CD14-positive monocyte (primary cell): ENCODE measurements at regions of chr12 and their contacts with region 1.

Region 1: DNA sequence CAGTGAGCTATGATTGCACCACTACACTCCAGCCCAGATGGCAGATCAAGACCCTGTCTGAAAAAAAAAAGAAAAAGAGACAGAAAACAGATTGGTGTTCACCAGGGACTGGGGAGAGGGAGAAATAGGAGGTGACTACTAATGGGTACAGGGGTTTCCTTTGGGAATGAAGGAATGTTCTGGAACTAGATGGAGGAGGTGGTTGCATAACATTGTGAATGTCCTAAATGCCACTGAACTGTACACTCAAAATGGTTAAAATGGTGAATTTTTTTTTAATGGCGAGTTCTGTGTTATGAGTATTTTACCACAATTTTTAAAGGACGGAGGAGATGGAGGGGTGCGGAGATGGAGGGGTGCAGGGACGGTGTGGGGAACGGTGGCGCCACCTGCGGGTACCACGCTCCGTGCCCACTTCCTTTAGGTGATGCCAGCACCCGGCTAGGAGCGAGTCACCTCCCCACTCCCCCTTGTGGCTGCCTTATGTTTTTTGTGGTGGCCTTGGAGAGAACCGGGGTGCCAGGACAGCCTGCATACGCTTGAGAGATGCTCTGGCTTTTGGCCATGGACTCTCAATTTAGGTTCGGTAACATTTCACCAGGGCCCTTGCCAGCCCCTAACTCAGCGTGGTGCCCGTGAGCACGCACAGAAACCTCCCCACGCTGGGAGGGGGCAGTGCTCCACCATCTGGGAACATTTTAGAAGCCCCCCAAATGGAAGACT is 16.1 kb downstream of the UBC start:
- DNase-seq: peak in 2 of 3 donors; percentile 68 to 81
- H3K4me3 ChIP-seq: no peak overlapping the region
- H3K4me3 Mint-ChIP-seq: peak overlapping the region; percentile 58 to 71
- H3K27ac ChIP-seq: no peak overlapping the region
- H3K27ac Mint-ChIP-seq: peak overlapping the region in 1 of 7 donors; percentile 24
- H3K4me1 ChIP-seq: peaks cover 8% of the 10 kb centered on the region in 2 donors
- H3K4me1 Mint-ChIP-seq: peaks cover 15% of the 10 kb centered on the region
- H3K27me3 ChIP-seq: no peaks in the 10 kb centered on the region
- H3K27me3 Mint-ChIP-seq: peaks cover 0 to 4% (median 3%) of the 10 kb centered on the region in 3 donors
- CTCF ChIP-seq: peak; percentile 79

Region 2: GRCh38 chr12:124036674-124037109 is 861.7 kb before region 1 on chr12:
- intact Hi-C with region 1: loop called (anchors 10 kb)
- DNase-seq: peak; percentile 34 to 55 (median 44)
- H3K4me3 ChIP-seq: no peak overlapping the region
- H3K4me3 Mint-ChIP-seq: no peak overlapping the region
- H3K27ac ChIP-seq: no peak overlapping the region
- H3K27ac Mint-ChIP-seq: peak overlapping the region in 1 of 7 donors; percentile 19
- H3K4me1 ChIP-seq: peaks cover 0 to 4% of the 10 kb centered on the region in 2 donors
- H3K4me1 Mint-ChIP-seq: peaks cover 16% of the 10 kb centered on the region
- H3K27me3 ChIP-seq: no peaks in the 10 kb centered on the region
- H3K27me3 Mint-ChIP-seq: peaks cover 0 to 3% (median 3%) of the 10 kb centered on the region in 3 donors
- CTCF ChIP-seq: peak; percentile 95

Region 3: GRCh38 chr12:124940549-124941527 is 42.5 kb after region 1 on chr12:
- intact Hi-C with region 1: no loop called
- DNase-seq: peak; percentile 73 to 88 (median 84)
- H3K4me3 ChIP-seq: peak overlapping the region in 2 of 3 experiments; percentile 3 to 77
- H3K4me3 Mint-ChIP-seq: no peak overlapping the region
- H3K27ac ChIP-seq: peak overlapping the region; percentile 9 to 30
- H3K27ac Mint-ChIP-seq: peak overlapping the region in 1 of 7 donors; percentile 30
- H3K4me1 ChIP-seq: peaks cover 57 to 58% of the 10 kb centered on the region in 2 donors
- H3K4me1 Mint-ChIP-seq: peaks cover 30% of the 10 kb centered on the region
- H3K27me3 ChIP-seq: no peaks in the 10 kb centered on the region
- H3K27me3 Mint-ChIP-seq: peaks cover 3 to 7% (median 5%) of the 10 kb centered on the region in 3 donors
- CTCF ChIP-seq: peak; percentile 94